A549 (cell line): ENCODE measurements at regions of chr1 and their contacts with region 1.

Region 1: GRCh38 chr1:46442317-46443161 is 47.1 kb upstream of the DMBX1 start:
- DNase-seq: peak; percentile 65 to 87
- ATAC-seq: peak; percentile 82 to 93
- H3K4me3 ChIP-seq: peak overlapping the region; percentile 26; the same call in 2 of the 3 replicates
- H3K27ac ChIP-seq: peak overlapping the region in 1 of 2 experiments; percentile 54; a peak in 2 of 6 replicates
- H3K4me1 ChIP-seq: no peaks in the 10 kb centered on the region
- CTCF ChIP-seq: peak; percentile 65
- EP300 ChIP-seq: no peak
- POLR2A ChIP-seq: no peak
- RAD21 ChIP-seq: peak; percentile 23 to 44; a peak in 3 of 5 replicates

Region 2: GRCh38 chr1:46431691-46432090 is 10.8 kb before region 1 on chr1:
- CTCF ChIA-PET with region 1: interaction called, 24 read pairs
- POLR2A ChIA-PET with region 1: no interaction called
- DNase-seq: no peak
- ATAC-seq: peak; percentile 24 to 58; a peak in 3 of 6 replicates
- H3K4me3 ChIP-seq: no peak overlapping the region
- H3K27ac ChIP-seq: no peak overlapping the region
- H3K4me1 ChIP-seq: no peaks in the 10 kb centered on the region
- CTCF ChIP-seq: no peak
- EP300 ChIP-seq: no peak
- POLR2A ChIP-seq: no peak
- RAD21 ChIP-seq: no peak

Region 3: GRCh38 chr1:46477153-46477929 is 34.8 kb after region 1 on chr1:
- CTCF ChIA-PET with region 1: interaction called, 20 read pairs
- POLR2A ChIA-PET with region 1: no interaction called
- DNase-seq: peak; percentile 61 to 88
- ATAC-seq: peak; percentile 78 to 92
- H3K4me3 ChIP-seq: no peak overlapping the region
- H3K27ac ChIP-seq: no peak overlapping the region
- H3K4me1 ChIP-seq: no peaks in the 10 kb centered on the region
- CTCF ChIP-seq: peak; percentile 77
- EP300 ChIP-seq: no peak
- POLR2A ChIP-seq: no peak
- RAD21 ChIP-seq: peak; percentile 90

Region 4: GRCh38 chr1:46489638-46490405 is 47.3 kb after region 1 on chr1 and contains the start of gene DMBX1:
- CTCF ChIA-PET with region 1: interaction called, 10 read pairs
- POLR2A ChIA-PET with region 1: no interaction called
- DNase-seq: peak; percentile 35 to 85
- ATAC-seq: peak; percentile 88 to 94
- H3K4me3 ChIP-seq: peak within 1 kb of the TSS; percentile 56
- H3K27ac ChIP-seq: peak within 1 kb of the TSS; percentile 62 to 85; a peak in 5 of 6 replicates
- H3K4me1 ChIP-seq: peaks cover 4% of the 10 kb centered on the region; the same call in 1 of the 3 replicates
- CTCF ChIP-seq: no peak
- EP300 ChIP-seq: no peak
- POLR2A ChIP-seq: no peak
- RAD21 ChIP-seq: no peak
- polyA plus RNA-seq, gene DMBX1: 0.40 and 0.44 TPM in 2 replicates

Region 5: GRCh38 chr1:46522184-46522968 is 79.8 kb after region 1 on chr1:
- CTCF ChIA-PET with region 1: interaction called, 235 read pairs
- POLR2A ChIA-PET with region 1: no interaction called
- DNase-seq: peak in 1 of 2 experiments; percentile 53
- ATAC-seq: peak; percentile 31 to 32
- H3K4me3 ChIP-seq: no peak overlapping the region
- H3K27ac ChIP-seq: peak overlapping the region; percentile 85 to 97
- H3K4me1 ChIP-seq: peaks cover 77% of the 10 kb centered on the region
- CTCF ChIP-seq: no peak
- EP300 ChIP-seq: peak; percentile 37 to 72; a peak in 3 of 5 replicates
- POLR2A ChIP-seq: no peak
- RAD21 ChIP-seq: no peak

Region 6: DNA sequence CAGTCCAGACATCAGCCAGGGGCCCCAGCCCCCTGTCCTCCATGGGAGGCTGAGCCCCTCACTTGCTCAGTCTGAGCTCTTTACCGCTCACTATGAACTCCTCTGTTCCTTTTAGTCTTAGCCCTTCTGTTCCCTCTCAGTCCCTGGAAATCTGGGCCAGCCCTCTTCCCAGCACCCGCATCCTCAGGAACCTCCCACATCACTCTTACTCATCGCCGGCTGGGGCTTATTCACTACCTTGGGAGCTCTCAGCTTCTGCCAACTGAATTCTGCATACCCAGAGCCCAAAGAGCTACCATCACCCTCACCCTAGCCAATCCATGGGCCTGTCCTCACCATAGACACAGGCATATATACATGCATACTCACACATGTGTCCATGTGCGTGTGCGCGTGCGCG is 97.4 kb after region 1 on chr1:
- CTCF ChIA-PET with region 1: interaction called, 235 read pairs
- POLR2A ChIA-PET with region 1: no interaction called
- DNase-seq: peak in 1 of 2 experiments; percentile 27
- ATAC-seq: peak; percentile 74
- H3K4me3 ChIP-seq: no peak overlapping the region
- H3K27ac ChIP-seq: 0 out of 6 replicates have a peak overlapping the region, but pooled peaks of 1 of the 2 experiments have one; percentile 52
- H3K4me1 ChIP-seq: peaks cover 3% of the 10 kb centered on the region; the same call in 1 of the 3 replicates
- CTCF ChIP-seq: no peak
- EP300 ChIP-seq: no peak
- POLR2A ChIP-seq: no peak
- RAD21 ChIP-seq: no peak

Region 7: DNA sequence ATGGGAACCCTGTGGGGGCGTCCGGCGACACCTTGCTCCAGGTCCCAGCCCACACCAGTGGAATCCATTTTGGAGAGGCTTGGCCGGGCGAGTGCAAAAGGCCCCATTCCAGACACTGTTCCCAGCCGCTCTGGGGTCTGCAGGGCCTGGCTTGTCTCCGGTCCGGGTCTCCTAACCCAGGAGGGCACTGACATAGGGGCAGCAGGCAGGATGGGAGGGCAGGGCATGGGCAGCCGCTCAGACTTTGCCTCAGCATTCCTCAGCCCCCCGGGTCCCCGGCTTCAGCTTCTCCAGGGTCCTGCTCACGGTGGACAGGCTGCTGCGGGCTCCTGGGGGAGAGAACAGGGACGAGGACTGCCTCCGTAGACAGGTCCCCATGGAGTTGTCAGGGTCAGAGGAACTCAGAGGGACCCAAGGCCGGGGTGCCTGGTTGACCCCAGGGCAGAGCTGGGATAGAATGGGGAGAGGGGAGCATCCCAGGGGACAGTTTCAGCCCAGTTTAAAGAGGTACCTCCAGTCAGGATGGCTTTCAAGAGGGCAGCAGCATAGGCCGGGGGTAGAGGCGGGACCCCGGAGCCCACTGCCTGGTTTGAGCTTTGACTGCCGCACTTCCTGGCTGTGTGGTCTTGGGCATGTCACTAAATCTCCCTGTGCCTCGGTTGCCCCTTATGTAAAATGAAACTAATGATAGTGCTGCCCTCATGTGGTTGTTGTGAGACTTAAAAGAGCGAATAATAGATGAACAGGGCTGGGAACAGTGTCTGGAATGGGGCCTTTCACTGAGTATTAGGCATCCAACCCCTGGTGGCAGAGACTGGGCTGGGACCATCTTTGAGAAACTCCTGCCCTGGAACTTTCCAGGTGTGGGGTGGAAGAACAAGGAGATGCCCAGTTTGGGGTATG is 105.2 kb after region 1 on chr1:
- CTCF ChIA-PET with region 1: interaction called, 22 read pairs
- POLR2A ChIA-PET with region 1: no interaction called
- DNase-seq: peak; percentile 34 to 56
- ATAC-seq: peak; percentile 61 to 86; a peak in 5 of 6 replicates
- H3K4me3 ChIP-seq: no peak overlapping the region
- H3K27ac ChIP-seq: no peak overlapping the region
- H3K4me1 ChIP-seq: no peaks in the 10 kb centered on the region
- CTCF ChIP-seq: peak; percentile 54
- EP300 ChIP-seq: no peak
- POLR2A ChIP-seq: no peak
- RAD21 ChIP-seq: peak; percentile 45 to 49